Heart right ventricle (tissue), 16 donors: ENCODE measurements at regions of chr2 and their contacts with region 1.

Region 1: GRCh38 chr2:158507166-158507565 is 50.4 kb downstream of the PKP4 start:
- DNase-seq: no peak
- ATAC-seq: no peak
- H3K4me3 ChIP-seq: no peak overlapping the region
- H3K27ac ChIP-seq: no peak overlapping the region
- H3K4me1 ChIP-seq: peaks cover 0 to 46% (median 18%) of the 10 kb centered on the region in 9 donors
- H3K27me3 ChIP-seq: no peaks in the 10 kb centered on the region
- CTCF ChIP-seq: no peak

Region 2: GRCh38 chr2:158578703-158579330 is 71.7 kb after region 1 on chr2:
- intact Hi-C with region 1: loop called in 1 of 10 experiments (anchors 10 kb)
- DNase-seq: no peak
- ATAC-seq: no peak
- H3K4me3 ChIP-seq: no peak overlapping the region
- H3K27ac ChIP-seq: no peak overlapping the region
- H3K4me1 ChIP-seq: peaks cover 0 to 12% (median 4%) of the 10 kb centered on the region in 9 donors
- H3K27me3 ChIP-seq: no peaks in the 10 kb centered on the region
- CTCF ChIP-seq: no peak

Region 3: DNA sequence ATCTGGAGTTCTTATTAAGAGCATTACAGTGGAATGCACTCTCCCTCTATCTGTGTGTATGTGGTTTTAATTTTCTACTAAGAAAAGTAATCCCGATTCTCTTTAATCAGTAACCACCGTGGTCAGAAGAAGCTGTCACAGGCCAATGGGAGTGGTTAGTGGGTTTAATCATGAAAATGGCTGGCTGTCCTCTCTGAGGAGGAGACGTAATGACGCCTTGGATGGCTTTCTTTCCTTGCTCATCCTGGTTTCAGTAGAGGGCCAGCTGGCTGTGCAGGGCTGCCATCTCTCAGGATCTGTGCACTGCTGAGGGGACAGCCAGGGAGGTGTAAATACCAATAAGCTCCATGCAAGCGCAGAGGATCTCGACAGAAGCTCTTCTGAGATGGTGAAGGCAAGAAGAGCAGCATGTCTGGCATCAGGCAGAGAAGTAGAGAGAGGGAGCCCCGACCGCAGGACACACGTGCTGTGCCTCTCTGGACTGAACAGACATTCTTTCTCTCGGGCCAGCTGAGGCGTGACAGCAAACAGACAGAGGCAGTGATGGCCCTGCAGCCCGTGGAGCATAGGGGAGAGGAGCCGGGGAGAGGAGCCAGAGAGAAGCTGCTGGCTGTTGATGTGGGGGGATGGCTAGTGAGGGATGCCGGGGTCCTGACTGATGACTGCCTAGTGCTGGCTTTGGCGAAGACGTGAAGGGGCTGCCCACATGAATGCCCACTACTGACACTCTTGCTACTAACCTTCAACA is 222.9 kb after region 1 on chr2:
- intact Hi-C with region 1: no loop called
- DNase-seq: no peak
- ATAC-seq: peak in 1 of 8 donors; percentile 7
- H3K4me3 ChIP-seq: no peak overlapping the region
- H3K27ac ChIP-seq: no peak overlapping the region
- H3K4me1 ChIP-seq: peaks cover 0 to 26% (median 8%) of the 10 kb centered on the region in 9 donors
- H3K27me3 ChIP-seq: no peaks in the 10 kb centered on the region
- CTCF ChIP-seq: no peak